ENCODE measurements at regions of chr5 and their contacts with region 1.

Region 1: GRCh38 chr5:81301271-81302015 is at the start of gene ZCCHC9:
- DNase-seq: peak; percentile 98
- H3K4me3 ChIP-seq: peak within 1 kb of the TSS; percentile 73 to 90 (median 78)
- H3K27ac ChIP-seq: peak within 1 kb of the TSS; percentile 87 to 92 (median 92)
- H3K4me1 ChIP-seq: peaks cover 17 to 49% (median 43%) of the 10 kb centered on the region in 4 donors
- H3K27me3 ChIP-seq: no peaks in the 10 kb centered on the region
- CTCF ChIP-seq: peak; percentile 14 to 38 (median 26)
- EP300 ChIP-seq: no peak
- POLR2A ChIP-seq: no peak
- total RNA-seq, gene ZCCHC9: 18.7 to 38.6 (median 22.8) TPM

Region 2: GRCh38 chr5:80686757-80687156 is 614.7 kb before region 1 on chr5:
- intact Hi-C with region 1: loop called (anchors 10 kb)
- DNase-seq: no peak
- H3K4me3 ChIP-seq: no peak overlapping the region
- H3K27ac ChIP-seq: no peak overlapping the region
- H3K4me1 ChIP-seq: no peaks in the 10 kb centered on the region
- H3K27me3 ChIP-seq: no peaks in the 10 kb centered on the region
- CTCF ChIP-seq: peak in 2 of 3 experiments; percentile 17 to 30
- EP300 ChIP-seq: no peak
- POLR2A ChIP-seq: no peak

Region 3: DNA sequence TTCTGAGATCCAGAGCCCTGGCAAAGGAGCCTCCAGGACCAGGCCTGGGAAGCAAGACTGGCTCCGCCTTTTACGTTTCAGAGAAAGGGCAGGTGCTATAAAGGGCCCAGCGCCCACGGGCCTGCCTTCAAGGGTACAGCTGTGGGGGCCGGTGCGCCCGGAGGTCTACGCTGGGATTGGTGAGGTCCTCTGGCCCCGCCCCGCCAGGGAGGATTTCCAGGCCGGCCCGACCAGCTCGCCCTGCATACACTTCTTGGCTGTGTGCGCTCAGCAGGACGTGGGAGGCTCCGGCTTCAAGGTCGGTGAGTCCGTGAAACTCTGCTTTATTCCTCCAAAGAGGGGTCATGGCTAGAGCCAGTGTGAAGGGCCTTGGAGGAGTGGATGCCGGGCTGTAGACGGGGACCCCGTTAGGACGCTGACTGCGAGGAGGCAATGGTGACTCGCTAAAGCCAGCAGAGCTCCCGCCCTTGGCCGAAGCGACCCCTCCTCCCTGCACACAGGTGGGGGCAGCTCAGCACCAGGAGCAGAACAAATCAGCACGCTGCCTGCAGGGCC is 68.3 kb before region 1 on chr5 and contains the start of gene CKMT2:
- intact Hi-C with region 1: loop called (anchors 5 kb)
- DNase-seq: peak; percentile 94
- H3K4me3 ChIP-seq: peak within 1 kb of the TSS; percentile 45 to 57 (median 50)
- H3K27ac ChIP-seq: peak within 1 kb of the TSS; percentile 77 to 86 (median 82)
- H3K4me1 ChIP-seq: peaks cover 31 to 43% (median 43%) of the 10 kb centered on the region in 4 donors
- H3K27me3 ChIP-seq: no peaks in the 10 kb centered on the region
- CTCF ChIP-seq: no peak
- EP300 ChIP-seq: no peak
- POLR2A ChIP-seq: peak; percentile 57
- total RNA-seq, gene CKMT2: 8.6 to 14.9 (median 12.9) TPM

Region 4: DNA sequence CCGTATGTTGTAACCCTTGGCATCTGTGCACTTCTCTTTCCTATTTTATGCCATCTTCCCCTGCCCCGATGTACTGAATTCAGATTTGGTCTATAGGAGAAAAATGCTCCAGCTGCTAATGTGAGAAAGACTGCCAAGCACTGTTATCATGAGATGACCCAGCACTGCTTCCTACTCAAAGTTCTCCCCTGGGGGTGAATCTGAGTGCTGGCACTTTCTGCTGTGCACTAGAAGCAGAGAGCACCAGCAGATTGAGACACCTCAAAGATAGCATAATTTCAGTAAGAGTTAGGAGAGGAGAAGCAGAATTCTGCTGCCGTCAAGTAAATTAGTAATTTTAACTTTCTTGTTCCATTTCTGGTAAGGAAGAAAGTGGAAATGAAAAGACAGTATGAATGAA is 185.3 kb after region 1 on chr5:
- intact Hi-C with region 1: no loop called
- DNase-seq: no peak
- H3K4me3 ChIP-seq: no peak overlapping the region
- H3K27ac ChIP-seq: no peak overlapping the region
- H3K4me1 ChIP-seq: no peaks in the 10 kb centered on the region
- H3K27me3 ChIP-seq: no peaks in the 10 kb centered on the region
- CTCF ChIP-seq: no peak
- EP300 ChIP-seq: no peak
- POLR2A ChIP-seq: no peak